BJ (cell line): ENCODE measurements at regions of chr2 and their contacts with region 1.

Region 1: GRCh38 chr2:61862085-61862484 is 8.2 kb upstream of the FAM161A start:
- DNase-seq: no peak
- H3K4me3 ChIP-seq: no peak overlapping the region
- H3K27me3 ChIP-seq: no peaks in the 10 kb centered on the region
- CTCF ChIP-seq: no peak

Region 2: GRCh38 chr2:61822255-61822654 is 39.8 kb before region 1 on chr2:
- CTCF ChIA-PET with region 1: no interaction called
- POLR2A ChIA-PET with region 1: no interaction called
- DNase-seq: no peak
- H3K4me3 ChIP-seq: no peak overlapping the region
- H3K27me3 ChIP-seq: no peaks in the 10 kb centered on the region
- CTCF ChIP-seq: no peak

Region 3: DNA sequence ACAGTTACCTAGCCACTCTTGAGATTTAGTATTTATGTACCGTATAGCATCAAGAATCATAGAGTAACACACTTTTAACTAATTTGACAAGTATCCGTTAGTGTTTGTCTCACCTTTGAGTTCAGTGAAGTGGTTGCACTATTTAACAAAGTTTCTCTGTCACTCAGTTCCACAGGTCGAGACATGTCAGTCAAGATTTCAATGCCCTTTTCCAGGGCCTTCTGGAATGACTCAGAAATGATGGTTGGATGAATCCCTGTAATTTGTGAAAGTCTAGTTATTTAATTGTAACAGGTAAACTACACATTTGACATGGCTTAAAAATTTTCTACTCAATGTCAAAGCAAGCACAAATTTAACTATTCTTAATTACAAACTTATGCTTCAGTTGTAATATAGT is 16.7 kb after region 1 on chr2:
- CTCF ChIA-PET with region 1: no interaction called
- POLR2A ChIA-PET with region 1: interaction called, 16 read pairs
- DNase-seq: no peak
- H3K4me3 ChIP-seq: no peak overlapping the region
- H3K27me3 ChIP-seq: no peaks in the 10 kb centered on the region
- CTCF ChIP-seq: no peak